Dorsolateral prefrontal cortex (tissue), 120 donors: ENCODE measurements at regions of chr2 and their contacts with region 1.

Region 1: GRCh38 chr2:127157651-127158470 is 50.9 kb upstream of the BIN1 start:
- DNase-seq: peak in 1 of 10 donors; percentile 29
- H3K4me3 ChIP-seq: no peak overlapping the region
- H3K27ac ChIP-seq: peak overlapping the region in 28 of 59 donors; percentile 4 to 74 (median 44)
- H3K27me3 ChIP-seq: no peaks in the 10 kb centered on the region
- CTCF ChIP-seq: peak in 23 of 56 donors; percentile 6 to 51 (median 24)

Region 2: GRCh38 chr2:127064642-127065250 is 93.1 kb before region 1 on chr2:
- intact Hi-C with region 1: loop called in 1 of 2 experiments (anchors 5 kb)
- DNase-seq: peak in 5 of 10 donors; percentile 64 to 92 (median 71)
- H3K4me3 ChIP-seq: peak overlapping the region in 1 of 59 donors; percentile 1
- H3K27ac ChIP-seq: peak overlapping the region; percentile 43 to 99 (median 95)
- H3K27me3 ChIP-seq: no peaks in the 10 kb centered on the region
- CTCF ChIP-seq: peak in 4 of 56 donors; percentile 7 to 27 (median 16)

Region 3: DNA sequence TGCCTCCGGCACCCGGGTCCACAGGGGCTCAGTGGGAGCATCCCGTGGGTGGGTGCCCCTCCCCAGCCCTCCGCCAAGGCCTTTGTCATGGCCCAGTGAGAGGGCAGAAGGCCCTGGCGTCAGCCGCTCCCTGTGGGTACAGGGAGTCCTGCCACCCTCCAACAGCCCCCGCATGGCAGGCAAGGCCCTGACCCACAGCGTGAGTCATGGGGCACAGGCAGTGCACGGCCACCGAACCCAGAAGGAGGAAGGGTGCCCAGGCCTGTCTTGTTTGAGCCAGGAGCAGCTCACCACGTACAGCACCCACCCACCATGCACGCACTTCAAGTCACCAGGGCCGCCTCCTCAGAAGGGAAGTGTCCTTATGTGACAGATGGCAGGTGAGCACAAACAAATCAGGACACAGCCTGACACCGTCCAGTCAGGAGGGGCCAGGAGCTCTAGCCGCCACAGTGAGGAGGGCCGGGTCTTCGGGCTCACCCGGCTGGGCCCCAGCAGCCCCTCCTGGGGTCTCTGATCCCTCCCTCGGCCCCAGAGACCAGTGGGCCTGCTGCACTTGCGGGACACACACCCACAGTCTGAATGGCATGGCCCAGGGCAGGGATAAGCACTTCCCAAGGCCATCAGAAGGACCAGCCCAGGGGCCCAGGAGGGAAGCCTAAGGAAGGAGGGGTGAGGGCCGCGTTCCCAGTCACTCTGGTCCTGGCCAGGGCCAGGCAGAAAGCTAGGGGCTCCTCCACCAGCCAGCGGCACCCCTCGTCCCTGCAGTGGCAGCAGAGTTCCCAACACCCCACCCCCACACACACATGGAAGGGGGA is 76.7 kb before region 1 on chr2:
- intact Hi-C with region 1: no loop called
- DNase-seq: peak in 7 of 10 donors; percentile 42 to 89 (median 68)
- H3K4me3 ChIP-seq: peak overlapping the region in 55 of 59 donors; percentile 0 to 61 (median 39)
- H3K27ac ChIP-seq: peak overlapping the region in 58 of 59 donors; percentile 44 to 99 (median 90)
- H3K27me3 ChIP-seq: no peaks in the 10 kb centered on the region
- CTCF ChIP-seq: no peak